ENCODE measurements at regions of chr21 and their contacts with region 1.

Region 1: GRCh38 chr21:36169436-36170128 is 13.0 kb downstream of the DOP1B start:
- DNase-seq: no peak
- ATAC-seq: no peak
- H3K4me3 ChIP-seq: no peak overlapping the region
- H3K4me3 Mint-ChIP-seq: no peak overlapping the region
- H3K27ac ChIP-seq: no peak overlapping the region
- H3K27ac Mint-ChIP-seq: no peak overlapping the region
- H3K4me1 ChIP-seq: peaks cover 2 to 13% of the 10 kb centered on the region in 2 experiments
- H3K4me1 Mint-ChIP-seq: peaks cover 6 to 17% (median 6%) of the 10 kb centered on the region in 3 donors
- H3K27me3 ChIP-seq: no peaks in the 10 kb centered on the region
- H3K27me3 Mint-ChIP-seq: no peaks in the 10 kb centered on the region

Region 2: GRCh38 chr21:35682904-35683549 is 486.6 kb before region 1 on chr21:
- CTCF ChIA-PET with region 1: no interaction called
- POLR2A ChIA-PET with region 1: no interaction called
- DNase-seq: no peak
- ATAC-seq: no peak
- H3K4me3 ChIP-seq: no peak overlapping the region
- H3K4me3 Mint-ChIP-seq: no peak overlapping the region
- H3K27ac ChIP-seq: no peak overlapping the region
- H3K27ac Mint-ChIP-seq: no peak overlapping the region
- H3K4me1 ChIP-seq: no peaks in the 10 kb centered on the region
- H3K4me1 Mint-ChIP-seq: no peaks in the 10 kb centered on the region
- H3K27me3 ChIP-seq: peaks cover 0 to 2% of the 10 kb centered on the region in 2 experiments
- H3K27me3 Mint-ChIP-seq: peaks cover 21 to 24% of the 10 kb centered on the region in 2 donors

Region 3: DNA sequence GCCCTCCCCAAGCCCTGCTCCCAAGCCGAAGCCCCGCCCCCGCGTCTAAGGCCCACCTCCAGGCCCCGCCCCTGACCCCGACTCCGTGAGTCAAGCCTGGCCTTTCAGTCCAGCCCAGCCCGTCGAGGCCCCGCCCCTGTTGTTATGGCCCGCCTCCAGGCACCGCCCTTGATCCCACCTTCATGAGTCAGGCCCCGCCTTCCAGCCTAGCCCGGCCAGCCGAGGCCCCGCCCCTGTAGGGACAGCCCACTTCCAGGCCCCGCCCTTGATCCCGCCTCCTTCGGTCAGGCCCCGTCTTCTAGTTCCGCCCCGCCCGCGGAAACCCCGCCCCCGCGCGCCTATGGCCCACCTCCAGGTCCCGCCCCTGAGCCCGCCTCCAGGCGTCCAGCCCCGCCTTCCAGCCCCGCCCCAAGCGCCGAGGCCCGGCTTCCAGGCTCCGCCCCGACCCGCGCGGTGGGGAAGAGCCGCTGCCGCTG is 13.2 kb before region 1 on chr21:
- CTCF ChIA-PET with region 1: interaction called, 6 to 12 read pairs
- POLR2A ChIA-PET with region 1: interaction called in 1 of 2 experiments, 4 read pairs
- DNase-seq: peak; percentile 97 to 100 (median 100)
- ATAC-seq: peak; percentile 87 to 91 (median 88)
- H3K4me3 ChIP-seq: peak overlapping the region; percentile 78 to 89
- H3K4me3 Mint-ChIP-seq: peak overlapping the region; percentile 79 to 84 (median 81)
- H3K27ac ChIP-seq: no peak overlapping the region
- H3K27ac Mint-ChIP-seq: peak overlapping the region in 1 of 2 donors; percentile 68
- H3K4me1 ChIP-seq: peaks cover 9 to 22% of the 10 kb centered on the region in 2 experiments
- H3K4me1 Mint-ChIP-seq: peaks cover 26 to 43% (median 37%) of the 10 kb centered on the region in 3 donors
- H3K27me3 ChIP-seq: peaks cover 0 to 5% of the 10 kb centered on the region in 2 experiments
- H3K27me3 Mint-ChIP-seq: no peaks in the 10 kb centered on the region